Activated T-helper 2 cell treated with anti-CD3 and anti-CD28 coated beads, Interferon-gamma antibody, Interleukin-2, Interleukin-4, amounts not matched to agents 10 μg/mL and 5 μg/mL and 100 μg/mL, durations not matched to agents 14 hours and 24 hours and 36 hours (primary cell): ENCODE measurements at regions of chr11 and their contacts with region 1.

Region 1: GRCh38 chr11:3109921-3110706 is 52.9 kb upstream of the CARS1 start:
- DNase-seq: no peak
- H3K4me3 Mint-ChIP-seq: no peak overlapping the region
- H3K27ac Mint-ChIP-seq: no peak overlapping the region
- H3K4me1 Mint-ChIP-seq: no peaks in the 10 kb centered on the region
- H3K27me3 Mint-ChIP-seq: no peaks in the 10 kb centered on the region

Region 2: DNA sequence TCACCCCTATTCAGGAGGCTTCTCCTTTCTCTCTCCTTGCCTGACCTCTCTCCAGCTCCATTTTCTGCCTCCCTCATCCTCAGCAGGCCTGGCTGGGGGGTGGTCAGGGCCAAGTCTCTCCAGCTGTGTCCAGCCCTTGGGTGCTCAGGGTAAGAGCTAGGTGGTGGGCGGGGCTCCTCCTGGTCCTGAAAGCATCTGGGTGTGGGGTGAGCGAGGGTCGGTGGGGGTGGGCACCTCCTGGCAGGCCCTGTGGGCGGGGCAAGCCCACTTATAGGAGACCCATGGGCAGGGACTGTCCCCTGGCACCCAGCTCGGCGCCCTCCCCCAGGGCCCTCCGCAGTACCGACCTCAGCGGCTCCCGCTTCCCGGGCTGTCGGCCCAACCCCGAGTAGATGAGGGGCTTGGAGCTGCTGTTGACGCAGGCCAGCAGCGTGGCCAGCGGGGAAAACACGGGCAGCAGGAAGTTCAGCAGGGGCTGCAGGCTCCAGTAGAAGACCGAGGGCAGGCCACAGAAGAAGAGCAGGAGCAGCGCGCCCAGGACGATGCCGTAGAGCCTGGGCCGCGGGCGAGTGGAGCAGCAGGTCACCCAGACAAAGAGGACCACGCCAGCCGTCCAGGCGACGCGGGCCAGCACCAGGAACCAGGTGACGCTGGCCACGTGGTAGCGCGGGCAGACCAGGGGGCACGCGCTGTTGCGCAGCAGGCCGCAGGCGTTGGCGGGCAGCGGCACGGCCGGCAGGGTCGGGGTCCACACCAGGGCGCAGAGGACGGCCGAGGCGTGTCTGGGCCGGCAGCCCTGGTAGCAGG is 107.8 kb after region 1 on chr11:
- intact Hi-C with region 1: loop called (anchors 10 kb)
- DNase-seq: no peak
- H3K4me3 Mint-ChIP-seq: no peak overlapping the region
- H3K27ac Mint-ChIP-seq: no peak overlapping the region
- H3K4me1 Mint-ChIP-seq: peaks cover 4% of the 10 kb centered on the region
- H3K27me3 Mint-ChIP-seq: peaks cover 2% of the 10 kb centered on the region